BJ (cell line): ENCODE measurements at regions of chr20 and their contacts with region 1.

Region 1: DNA sequence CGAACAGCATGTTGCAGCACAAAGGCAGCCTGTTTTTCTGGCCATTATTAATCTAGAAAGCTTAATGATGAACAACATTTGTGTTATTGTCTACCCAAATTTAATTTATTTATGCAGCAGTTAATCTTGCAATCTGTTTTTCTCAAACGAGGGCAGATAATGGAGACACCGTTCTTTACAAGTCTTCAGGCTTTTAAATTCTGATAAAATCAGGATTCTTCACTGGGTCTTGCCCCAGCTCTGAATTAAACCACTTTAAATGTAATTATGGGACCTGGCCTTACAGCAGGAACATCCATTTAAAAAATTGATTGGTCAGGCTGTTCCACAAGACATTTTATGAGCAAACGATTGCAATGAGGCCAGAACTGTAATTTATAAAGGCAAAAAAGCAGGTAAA is 26.5 kb upstream of the INSM1 start:
- DNase-seq: no peak
- H3K4me3 ChIP-seq: no peak overlapping the region
- H3K27me3 ChIP-seq: no peaks in the 10 kb centered on the region; the same call in 1 of the 2 replicates
- CTCF ChIP-seq: no peak

Region 2: GRCh38 chr20:20060234-20060998 is 281.0 kb before region 1 on chr20:
- CTCF ChIA-PET with region 1: no interaction called
- POLR2A ChIA-PET with region 1: no interaction called
- DNase-seq: no peak
- H3K4me3 ChIP-seq: no peak overlapping the region
- H3K27me3 ChIP-seq: peaks cover 2% of the 10 kb centered on the region
- CTCF ChIP-seq: no peak

Region 3: GRCh38 chr20:20327746-20328145 is 13.6 kb before region 1 on chr20:
- CTCF ChIA-PET with region 1: no interaction called
- POLR2A ChIA-PET with region 1: interaction called, 21 read pairs
- DNase-seq: no peak
- H3K4me3 ChIP-seq: no peak overlapping the region
- H3K27me3 ChIP-seq: no peaks in the 10 kb centered on the region
- CTCF ChIP-seq: no peak

Region 4: GRCh38 chr20:20353576-20353975 is 12.2 kb after region 1 on chr20:
- CTCF ChIA-PET with region 1: no interaction called
- POLR2A ChIA-PET with region 1: no interaction called
- DNase-seq: no peak
- H3K4me3 ChIP-seq: no peak overlapping the region
- H3K27me3 ChIP-seq: no peaks in the 10 kb centered on the region
- CTCF ChIP-seq: no peak

Region 5: GRCh38 chr20:20375862-20376261 is 34.5 kb after region 1 on chr20:
- CTCF ChIA-PET with region 1: no interaction called
- POLR2A ChIA-PET with region 1: no interaction called
- DNase-seq: no peak
- H3K4me3 ChIP-seq: no peak overlapping the region
- H3K27me3 ChIP-seq: peaks cover 11% of the 10 kb centered on the region
- CTCF ChIP-seq: no peak

Region 6: DNA sequence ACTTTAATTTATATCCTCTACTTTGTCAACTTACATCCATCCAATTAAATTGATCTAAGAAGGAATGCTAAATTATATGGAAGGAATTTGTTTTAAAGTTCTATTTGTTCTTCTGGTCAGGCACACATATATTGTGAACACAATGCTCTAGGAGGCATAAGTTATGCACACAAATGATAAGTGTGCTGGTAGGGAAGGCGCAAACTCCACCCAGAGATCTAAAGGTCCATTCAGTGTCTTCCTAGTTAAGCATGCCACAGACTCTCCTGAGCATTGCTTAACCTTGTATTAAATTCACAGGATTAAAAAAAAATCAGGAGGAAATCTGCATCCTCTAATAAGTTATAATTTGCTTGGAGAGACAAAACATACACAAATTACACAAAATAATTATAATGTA is 243.8 kb after region 1 on chr20:
- CTCF ChIA-PET with region 1: no interaction called
- POLR2A ChIA-PET with region 1: no interaction called
- DNase-seq: no peak
- H3K4me3 ChIP-seq: no peak overlapping the region
- H3K27me3 ChIP-seq: no peaks in the 10 kb centered on the region
- CTCF ChIP-seq: no peak